H1 (cell line): ENCODE measurements at regions of chr6 and their contacts with region 1.

Region 1: GRCh38 chr6:33248925-33249731 is 22.5 kb downstream of the VPS52 start:
- DNase-seq: peak; percentile 95 to 97
- H3K4me3 ChIP-seq: peak overlapping the region; percentile 33 to 73 (median 70)
- H3K27ac ChIP-seq: peak overlapping the region; percentile 44; the same call in 1 of the 2 replicates
- H3K4me1 ChIP-seq: peaks cover 0 to 10% (median 7%) of the 10 kb centered on the region in 4 experiments; a peak in 4 of 7 replicates
- H3K27me3 ChIP-seq: peaks cover 0 to 21% (median 11%) of the 10 kb centered on the region in 4 experiments; a peak in 6 of 7 replicates
- CTCF ChIP-seq: no peak
- EP300 ChIP-seq: no peak
- POLR2A ChIP-seq: peak in 1 of 2 experiments; percentile 70; a peak in 2 of 3 replicates
- RAD21 ChIP-seq: peak; percentile 6 to 22; a peak in 1 of 4 replicates

Region 2: DNA sequence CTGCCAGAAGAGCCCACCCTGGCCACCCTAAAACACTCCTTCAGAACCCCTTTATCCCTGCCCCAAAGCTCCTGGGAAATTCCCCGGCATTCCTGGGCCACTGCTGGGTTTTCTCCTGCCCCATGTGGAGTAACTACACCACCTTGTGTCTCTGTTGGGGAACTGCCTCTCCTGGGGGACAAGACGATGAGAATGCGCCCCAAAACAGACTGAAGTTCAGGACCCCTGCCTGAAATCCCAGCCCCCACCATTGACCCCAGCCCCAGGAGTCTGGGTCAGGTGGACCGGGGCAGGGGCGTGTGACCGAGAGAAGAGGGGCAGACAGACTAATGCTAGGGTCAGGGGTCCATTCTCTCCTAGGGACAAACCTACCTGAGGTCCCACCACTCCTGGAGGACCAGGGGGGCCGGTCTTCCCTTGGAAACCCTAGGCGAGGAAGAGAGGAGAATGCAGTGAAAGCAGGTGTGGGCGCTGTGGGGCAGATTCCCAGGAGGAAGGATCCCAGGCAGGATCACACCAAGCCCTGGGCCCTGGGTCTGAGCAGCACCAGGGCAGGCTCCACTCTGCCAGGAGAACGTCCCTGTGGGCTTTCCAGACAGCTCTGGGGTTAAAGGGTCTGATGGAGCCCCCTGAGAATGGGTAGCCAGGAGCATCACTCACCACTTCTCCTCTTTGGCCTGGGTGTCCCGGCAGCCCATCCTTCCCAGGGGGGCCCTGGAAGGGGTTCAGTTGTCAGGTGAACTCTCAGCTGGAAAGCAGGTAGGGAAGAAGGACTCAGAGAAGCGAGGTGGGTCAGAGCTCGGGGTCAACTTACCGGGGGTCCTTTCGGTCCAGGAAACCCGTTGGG is 76.2 kb before region 1 on chr6:
- CTCF ChIA-PET with region 1: interaction called, 26 read pairs
- POLR2A ChIA-PET with region 1: no interaction called
- DNase-seq: peak in 1 of 2 experiments; percentile 72
- H3K4me3 ChIP-seq: no peak overlapping the region
- H3K27ac ChIP-seq: no peak overlapping the region
- H3K4me1 ChIP-seq: no peaks in the 10 kb centered on the region; a peak in 2 of 7 replicates
- H3K27me3 ChIP-seq: no peaks in the 10 kb centered on the region
- CTCF ChIP-seq: peak in 2 of 3 experiments; percentile 87 to 93; a peak in 3 of 4 replicates
- EP300 ChIP-seq: no peak
- POLR2A ChIP-seq: no peak
- RAD21 ChIP-seq: peak; percentile 93 to 97

Region 3: DNA sequence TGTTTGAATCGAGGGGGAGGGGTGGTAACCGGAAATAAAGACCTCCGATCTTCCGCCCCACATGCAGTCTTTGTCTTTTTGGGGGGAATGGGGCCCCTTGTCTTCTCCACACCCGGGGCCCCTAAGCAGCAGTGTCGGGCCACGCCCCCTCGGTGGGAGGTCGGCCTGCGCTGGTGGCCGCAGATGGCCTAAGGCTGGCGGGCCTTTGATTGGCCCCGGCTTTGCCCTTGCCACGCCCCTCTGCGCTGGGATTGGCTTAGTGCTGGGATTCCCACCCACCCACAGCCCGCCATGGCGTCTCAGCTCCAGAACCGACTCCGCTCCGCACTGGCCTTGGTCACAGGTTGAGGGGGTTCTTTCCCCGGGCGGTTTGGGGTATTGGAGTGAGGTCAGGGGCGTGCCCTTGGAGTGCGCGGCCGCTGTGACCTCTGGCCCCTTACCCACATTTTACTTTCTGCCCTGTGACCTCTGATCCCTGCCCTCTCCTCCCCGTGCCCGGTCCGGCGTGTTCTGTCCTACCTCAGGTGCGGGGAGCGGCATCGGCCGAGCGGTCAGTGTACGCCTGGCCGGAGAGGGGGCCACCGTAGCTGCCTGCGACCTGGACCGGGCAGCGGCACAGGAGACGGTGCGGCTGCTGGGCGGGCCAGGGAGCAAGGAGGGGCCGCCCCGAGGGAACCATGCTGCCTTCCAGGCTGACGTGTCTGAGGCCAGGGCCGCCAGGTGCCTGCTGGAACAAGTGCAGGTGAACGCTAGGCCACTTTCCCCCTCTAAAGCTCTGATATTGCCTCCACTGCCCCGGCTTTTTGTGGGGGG is 44.5 kb before region 1 on chr6 and contains the start of gene HSD17B8:
- CTCF ChIA-PET with region 1: interaction called, 60 read pairs
- POLR2A ChIA-PET with region 1: interaction called, 15 read pairs
- DNase-seq: peak; percentile 72 to 98
- H3K4me3 ChIP-seq: peak within 1 kb of the TSS; percentile 71 to 93 (median 72)
- H3K27ac ChIP-seq: no peak within 1 kb of the TSS
- H3K4me1 ChIP-seq: peaks cover 4 to 36% (median 11%) of the 10 kb centered on the region in 4 experiments
- H3K27me3 ChIP-seq: peaks cover 9 to 32% (median 25%) of the 10 kb centered on the region in 4 experiments; a peak in 6 of 7 replicates
- CTCF ChIP-seq: no peak
- EP300 ChIP-seq: no peak
- POLR2A ChIP-seq: peak in 1 of 2 experiments; percentile 48; a peak in 2 of 3 replicates
- RAD21 ChIP-seq: no peak
- total RNA-seq, gene HSD17B8: 3.3 and 3.6 TPM in 2 replicates

Region 4: DNA sequence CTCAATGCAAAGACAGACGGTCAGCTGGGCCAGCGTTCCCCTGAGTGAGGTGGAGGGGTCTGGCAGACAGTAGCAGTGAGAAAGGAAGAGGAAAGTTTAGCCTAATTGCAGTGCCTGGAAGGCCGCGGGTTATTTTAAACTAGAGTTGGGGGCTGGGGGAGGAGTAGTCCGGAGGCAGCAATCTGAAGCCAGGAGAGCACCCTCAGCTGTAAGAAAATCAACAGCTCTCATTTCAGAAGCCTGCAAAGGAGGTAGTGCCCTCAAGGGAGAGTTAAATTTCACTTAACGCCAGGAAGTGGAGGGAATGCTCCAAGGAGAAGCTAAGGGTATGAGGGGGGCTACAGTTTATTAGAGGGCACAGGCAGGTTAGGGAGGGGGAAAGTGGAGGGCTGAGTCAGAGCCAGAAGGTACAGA is 13.9 kb before region 1 on chr6:
- CTCF ChIA-PET with region 1: interaction called, 107 read pairs
- POLR2A ChIA-PET with region 1: interaction called, 9 read pairs
- DNase-seq: no peak
- H3K4me3 ChIP-seq: no peak overlapping the region
- H3K27ac ChIP-seq: no peak overlapping the region
- H3K4me1 ChIP-seq: peaks cover 0 to 3% (median 2%) of the 10 kb centered on the region in 4 experiments; a peak in 3 of 7 replicates
- H3K27me3 ChIP-seq: peaks cover 0 to 3% (median 0%) of the 10 kb centered on the region in 4 experiments; a peak in 1 of 7 replicates
- CTCF ChIP-seq: no peak
- EP300 ChIP-seq: no peak
- POLR2A ChIP-seq: no peak
- RAD21 ChIP-seq: no peak

Region 5: DNA sequence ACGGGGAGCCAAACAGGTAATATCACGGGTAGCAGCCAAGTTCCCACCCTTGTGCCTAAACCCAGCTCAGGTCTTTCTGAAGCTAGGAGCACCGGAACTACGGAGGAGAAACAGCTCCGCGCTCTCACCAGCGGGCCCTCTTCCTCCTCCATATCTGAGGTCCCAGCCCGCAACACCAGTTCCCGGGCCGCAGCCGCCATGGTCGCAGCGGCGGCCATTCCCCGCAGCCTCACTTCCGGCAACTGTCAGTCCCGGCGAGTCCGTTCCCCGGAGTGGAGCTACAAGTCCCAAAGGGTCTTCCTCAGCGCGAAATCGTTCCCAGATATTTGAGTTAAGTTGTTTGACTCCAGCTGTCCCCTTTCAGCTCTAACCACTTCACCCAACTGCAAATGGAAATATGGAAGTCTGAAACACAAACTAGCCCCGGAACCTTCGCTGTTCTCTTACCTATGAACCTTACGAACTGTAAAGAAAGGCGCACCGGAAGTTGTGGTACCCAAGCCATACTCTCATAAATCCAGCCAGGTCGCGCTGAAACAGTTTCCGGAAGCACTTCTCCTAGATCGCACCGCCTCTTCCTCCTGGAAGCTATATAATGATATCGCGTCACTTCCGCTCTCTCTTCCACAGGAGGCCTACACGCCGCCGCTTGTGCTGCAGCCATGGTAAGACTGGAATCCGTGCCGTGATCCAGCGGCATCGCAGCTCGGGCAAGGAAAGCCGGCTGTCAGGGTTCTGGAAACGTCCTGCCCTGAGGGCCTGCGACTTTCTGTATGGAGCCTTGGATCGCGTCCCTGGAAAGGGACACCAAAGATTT is 22.5 kb after region 1 on chr6 and contains the starts of genes RPS18 and VPS52:
- CTCF ChIA-PET with region 1: interaction called, 8 read pairs
- POLR2A ChIA-PET with region 1: interaction called, 25 read pairs
- DNase-seq: peak; percentile 88
- H3K4me3 ChIP-seq: peak within 1 kb of the TSS; percentile 81 to 100 (median 100)
- H3K27ac ChIP-seq: peak within 1 kb of the TSS; percentile 98
- H3K4me1 ChIP-seq: peaks cover 0 to 22% (median 8%) of the 10 kb centered on the region in 4 experiments; a peak in 6 of 7 replicates
- H3K27me3 ChIP-seq: no peaks in the 10 kb centered on the region
- CTCF ChIP-seq: no peak
- EP300 ChIP-seq: no peak
- POLR2A ChIP-seq: peak in 1 of 2 experiments; percentile 98; a peak in 2 of 3 replicates
- RAD21 ChIP-seq: no peak
- total RNA-seq, gene RPS18: 2,791 and 2,796 TPM in 2 replicates
- total RNA-seq, gene VPS52: 35.0 and 36.5 TPM in 2 replicates

Region 6: DNA sequence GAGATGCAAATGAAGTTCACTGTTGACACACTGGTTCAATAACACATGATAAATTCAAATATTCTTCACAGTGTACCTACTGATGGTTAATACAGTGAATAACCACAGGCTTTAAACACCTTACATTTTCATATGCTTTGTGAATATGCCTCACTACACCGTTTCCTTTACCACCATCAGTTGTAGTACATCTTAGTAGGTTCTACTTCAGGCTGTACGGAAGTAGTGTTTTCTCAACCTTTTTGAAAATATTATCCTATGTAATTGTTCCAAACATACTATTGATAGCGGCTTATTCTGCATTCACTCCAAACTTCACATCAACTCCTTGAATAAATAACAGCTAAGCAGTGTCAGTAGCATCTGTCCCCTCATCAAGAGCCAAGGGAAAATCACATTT is 220.5 kb after region 1 on chr6:
- CTCF ChIA-PET with region 1: no interaction called
- POLR2A ChIA-PET with region 1: no interaction called
- DNase-seq: no peak
- H3K4me3 ChIP-seq: no peak overlapping the region
- H3K27ac ChIP-seq: no peak overlapping the region
- H3K4me1 ChIP-seq: no peaks in the 10 kb centered on the region
- H3K27me3 ChIP-seq: no peaks in the 10 kb centered on the region
- CTCF ChIP-seq: no peak
- EP300 ChIP-seq: no peak
- POLR2A ChIP-seq: no peak
- RAD21 ChIP-seq: no peak